Panc1 (cell line): ENCODE measurements at regions of chr7 and their contacts with region 1.

Region 1: GRCh38 chr7:116258734-116259133 is 48.4 kb downstream of the TES start:
- DNase-seq: no peak
- ATAC-seq: peak; percentile 56; the same call in 1 of the 2 replicates
- H3K4me3 ChIP-seq: no peak overlapping the region
- H3K27ac ChIP-seq: peak overlapping the region; percentile 100
- H3K4me1 ChIP-seq: peaks cover 22% of the 10 kb centered on the region
- H3K27me3 ChIP-seq: no peaks in the 10 kb centered on the region
- CTCF ChIP-seq: peak; percentile 75; the same call in 1 of the 2 replicates

Region 2: DNA sequence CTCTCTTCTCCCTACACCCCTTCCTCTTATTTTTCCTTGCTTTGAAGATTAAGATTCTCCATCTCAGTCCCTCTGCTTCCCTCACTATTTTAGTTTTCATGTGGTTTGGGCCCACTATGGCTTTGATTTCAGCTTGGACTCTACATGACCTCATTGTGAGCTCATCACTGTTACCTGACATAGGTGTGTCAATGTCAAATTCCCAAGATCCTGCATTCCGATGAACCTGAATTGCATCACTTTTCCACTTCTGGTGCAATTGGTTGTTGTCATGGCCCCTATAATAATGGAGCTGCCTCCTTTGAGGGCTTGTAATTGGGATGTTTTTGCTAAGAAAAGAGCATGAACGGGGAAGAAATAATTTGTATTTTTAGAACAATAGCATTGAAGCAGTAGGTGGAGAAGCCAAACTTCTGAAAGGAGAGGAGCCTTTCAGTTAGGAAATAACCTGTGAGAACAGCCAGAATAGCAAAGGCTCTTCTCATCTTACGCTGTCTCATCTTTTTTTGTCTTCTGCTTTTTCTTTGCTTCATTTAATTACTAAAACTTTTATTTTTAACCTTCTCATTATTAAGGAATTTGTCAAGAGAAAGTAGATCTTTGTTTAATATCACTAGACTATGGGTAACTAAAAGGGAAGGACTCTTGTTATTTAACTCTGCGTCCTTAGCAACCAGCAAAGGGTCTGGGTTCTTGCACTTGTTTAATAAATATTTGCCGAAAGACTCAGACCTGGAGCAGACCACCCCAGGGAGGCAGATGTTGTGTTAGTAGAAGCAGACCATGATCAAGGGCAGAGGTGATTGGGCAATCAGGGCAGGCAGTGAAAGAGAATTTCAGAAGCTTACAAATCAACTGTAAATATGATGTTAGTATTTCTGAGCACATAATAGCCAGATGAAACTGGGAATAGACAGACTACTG is 47.0 kb after region 1 on chr7:
- CTCF ChIA-PET with region 1: no interaction called
- POLR2A ChIA-PET with region 1: interaction called, 15 read pairs
- in situ Hi-C with region 1: no loop called
- intact Hi-C with region 1: no loop called
- DNase-seq: no peak
- ATAC-seq: no peak
- H3K4me3 ChIP-seq: no peak overlapping the region
- H3K27ac ChIP-seq: peak overlapping the region; percentile 48; the same call in 1 of the 2 replicates
- H3K4me1 ChIP-seq: no peaks in the 10 kb centered on the region
- H3K27me3 ChIP-seq: no peaks in the 10 kb centered on the region
- CTCF ChIP-seq: no peak

Region 3: DNA sequence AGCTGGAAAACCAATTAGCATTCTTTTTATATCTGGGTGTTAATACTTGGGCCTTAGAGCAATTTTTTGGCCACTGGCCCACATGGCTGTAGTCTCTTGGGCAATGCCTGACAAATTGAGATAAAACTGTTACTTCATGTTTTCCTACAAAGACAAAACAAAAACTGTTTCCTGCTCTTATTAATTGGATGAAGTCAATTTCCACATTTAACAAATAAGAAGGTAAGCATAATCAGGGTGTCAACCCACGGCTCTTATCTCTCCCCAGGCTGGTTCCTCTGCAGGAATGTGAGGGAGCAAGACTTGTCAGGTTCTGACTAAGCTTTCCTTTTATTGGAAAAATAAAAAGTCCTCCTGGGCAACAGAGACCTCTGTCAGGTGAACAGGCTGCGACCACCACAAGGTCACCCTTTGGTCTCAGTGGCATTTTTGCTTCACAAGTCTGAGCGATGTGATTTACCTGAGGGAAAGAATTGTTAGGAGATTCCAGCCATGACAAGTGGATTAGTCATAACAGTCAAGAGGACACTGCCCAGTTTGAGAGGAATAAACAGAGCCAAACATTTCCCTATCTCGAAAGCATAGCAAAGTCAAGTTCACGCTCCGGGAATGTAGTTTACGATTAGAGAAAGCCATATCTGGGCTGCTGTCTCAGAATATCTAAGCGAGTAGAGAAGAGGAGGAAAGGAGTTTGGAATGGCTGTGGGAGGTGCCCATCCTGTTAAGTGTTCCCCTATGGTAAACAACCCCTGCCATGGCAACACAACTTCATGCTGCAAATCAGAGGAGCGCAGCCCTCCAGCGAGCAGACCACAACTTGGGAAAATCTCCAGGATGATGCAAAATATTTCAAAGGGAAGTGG is 96.0 kb after region 1 on chr7:
- CTCF ChIA-PET with region 1: no interaction called
- POLR2A ChIA-PET with region 1: interaction called, 6 read pairs
- in situ Hi-C with region 1: no loop called
- intact Hi-C with region 1: loop called (anchors 5 kb)
- DNase-seq: peak; percentile 98
- ATAC-seq: peak; percentile 92
- H3K4me3 ChIP-seq: peak overlapping the region; percentile 12 to 49
- H3K27ac ChIP-seq: peak overlapping the region; percentile 100
- H3K4me1 ChIP-seq: peaks cover 49% of the 10 kb centered on the region
- H3K27me3 ChIP-seq: no peaks in the 10 kb centered on the region
- CTCF ChIP-seq: no peak

Region 4: GRCh38 chr7:116511552-116512519 is 253.1 kb after region 1 on chr7:
- CTCF ChIA-PET with region 1: interaction called, 15 read pairs
- POLR2A ChIA-PET with region 1: no interaction called
- in situ Hi-C with region 1: no loop called
- intact Hi-C with region 1: no loop called
- DNase-seq: peak; percentile 96
- ATAC-seq: peak; percentile 75
- H3K4me3 ChIP-seq: peak overlapping the region; percentile 39 to 66
- H3K27ac ChIP-seq: peak overlapping the region; percentile 99
- H3K4me1 ChIP-seq: peaks cover 77% of the 10 kb centered on the region
- H3K27me3 ChIP-seq: no peaks in the 10 kb centered on the region
- CTCF ChIP-seq: no peak

Region 5: GRCh38 chr7:116588641-116589594 is 330.2 kb after region 1 on chr7:
- CTCF ChIA-PET with region 1: interaction called, 5 read pairs
- POLR2A ChIA-PET with region 1: no interaction called
- in situ Hi-C with region 1: no loop called
- intact Hi-C with region 1: loop called (anchors 2 kb)
- DNase-seq: peak; percentile 48
- ATAC-seq: peak; percentile 63
- H3K4me3 ChIP-seq: no peak overlapping the region
- H3K27ac ChIP-seq: peak overlapping the region; percentile 89
- H3K4me1 ChIP-seq: peaks cover 36% of the 10 kb centered on the region
- H3K27me3 ChIP-seq: no peaks in the 10 kb centered on the region
- CTCF ChIP-seq: peak; percentile 63; the same call in 1 of the 2 replicates

Region 6: DNA sequence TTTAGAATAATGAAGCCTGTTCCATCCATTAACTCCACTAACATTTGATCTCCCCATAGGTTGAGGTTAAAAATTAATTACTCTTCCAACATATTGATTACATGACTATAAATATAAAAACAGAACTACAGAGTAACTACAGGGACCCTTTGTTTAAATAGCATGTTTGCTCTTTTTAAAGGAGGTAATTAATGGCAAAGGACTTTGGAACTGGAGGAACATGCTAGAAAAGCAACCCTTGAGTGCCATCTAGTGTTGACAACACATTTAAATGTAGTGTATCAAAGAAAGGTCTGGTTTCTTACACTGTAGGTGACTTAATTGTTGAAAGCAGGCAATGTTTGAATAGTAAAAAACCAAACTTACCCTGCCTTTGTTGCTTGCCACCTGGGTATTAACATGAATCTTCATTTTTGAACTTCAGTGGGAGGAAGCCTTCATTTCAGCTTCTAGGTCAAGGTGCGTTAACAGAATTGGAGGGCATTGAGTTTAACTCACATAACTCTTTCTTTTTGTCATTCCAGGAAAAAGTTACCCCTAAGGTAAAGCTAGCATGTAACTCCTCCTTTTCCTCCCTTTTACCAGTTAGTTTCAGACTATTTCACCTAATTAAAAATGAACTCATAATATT is 551.0 kb after region 1 on chr7:
- CTCF ChIA-PET with region 1: no interaction called
- POLR2A ChIA-PET with region 1: no interaction called
- in situ Hi-C with region 1: no loop called
- intact Hi-C with region 1: loop called (anchors 5 kb)
- DNase-seq: peak; percentile 77
- ATAC-seq: peak; percentile 90
- H3K4me3 ChIP-seq: no peak overlapping the region
- H3K27ac ChIP-seq: peak overlapping the region; percentile 83
- H3K4me1 ChIP-seq: peaks cover 50% of the 10 kb centered on the region
- H3K27me3 ChIP-seq: no peaks in the 10 kb centered on the region
- CTCF ChIP-seq: peak; percentile 67; the same call in 1 of the 2 replicates